ENCODE measurements at regions of chr7 and their contacts with region 1.

Region 1: GRCh38 chr7:1925349-1925748 is 255.3 kb downstream of the ELFN1 start:
- DNase-seq: no peak
- ATAC-seq: no peak
- H3K4me3 Mint-ChIP-seq: peak overlapping the region; percentile 55
- H3K27ac Mint-ChIP-seq: no peak overlapping the region
- H3K4me1 Mint-ChIP-seq: peaks cover 53% of the 10 kb centered on the region
- H3K27me3 Mint-ChIP-seq: peaks cover 36% of the 10 kb centered on the region

Region 2: GRCh38 chr7:1940402-1940786 is 15.0 kb after region 1 on chr7:
- POLR2A ChIA-PET with region 1: interaction called, 17 read pairs
- DNase-seq: peak; percentile 91
- ATAC-seq: peak; percentile 84
- H3K4me3 Mint-ChIP-seq: peak overlapping the region; percentile 90
- H3K27ac Mint-ChIP-seq: peak overlapping the region; percentile 96
- H3K4me1 Mint-ChIP-seq: peaks cover 42% of the 10 kb centered on the region
- H3K27me3 Mint-ChIP-seq: peaks cover 4% of the 10 kb centered on the region

Region 3: DNA sequence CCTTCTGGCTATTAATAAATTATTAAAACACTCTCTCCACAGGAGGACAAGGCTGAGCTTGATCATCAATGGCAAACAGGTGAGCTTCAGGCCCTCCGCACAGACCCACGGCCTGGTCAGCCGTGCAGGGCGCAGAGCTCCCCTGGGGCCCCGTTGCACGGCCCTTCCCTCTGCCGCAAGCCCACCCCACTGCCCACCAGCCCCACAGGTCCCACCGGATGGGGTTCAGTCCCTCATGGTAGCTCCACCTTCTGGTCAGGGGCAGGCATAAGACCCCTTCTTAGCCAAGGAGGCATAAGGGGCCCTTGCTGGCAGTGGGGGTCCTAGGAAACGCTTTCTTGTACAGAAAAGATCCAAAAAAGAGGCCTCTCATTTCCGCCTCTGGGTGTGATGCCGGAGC is 222.8 kb after region 1 on chr7:
- POLR2A ChIA-PET with region 1: no interaction called
- DNase-seq: no peak
- ATAC-seq: no peak
- H3K4me3 Mint-ChIP-seq: no peak overlapping the region
- H3K27ac Mint-ChIP-seq: no peak overlapping the region
- H3K4me1 Mint-ChIP-seq: no peaks in the 10 kb centered on the region
- H3K27me3 Mint-ChIP-seq: no peaks in the 10 kb centered on the region

Measured in activated naive CD8-positive, alpha-beta T cell treated with anti-CD3 and anti-CD28 coated beads, Interleukin-2, amount 10 ng/mL, durations not matched to agents 7 days and 5 days (primary cell).